ENCODE measurements at regions of chr1 and their contacts with region 1.

Region 1: DNA sequence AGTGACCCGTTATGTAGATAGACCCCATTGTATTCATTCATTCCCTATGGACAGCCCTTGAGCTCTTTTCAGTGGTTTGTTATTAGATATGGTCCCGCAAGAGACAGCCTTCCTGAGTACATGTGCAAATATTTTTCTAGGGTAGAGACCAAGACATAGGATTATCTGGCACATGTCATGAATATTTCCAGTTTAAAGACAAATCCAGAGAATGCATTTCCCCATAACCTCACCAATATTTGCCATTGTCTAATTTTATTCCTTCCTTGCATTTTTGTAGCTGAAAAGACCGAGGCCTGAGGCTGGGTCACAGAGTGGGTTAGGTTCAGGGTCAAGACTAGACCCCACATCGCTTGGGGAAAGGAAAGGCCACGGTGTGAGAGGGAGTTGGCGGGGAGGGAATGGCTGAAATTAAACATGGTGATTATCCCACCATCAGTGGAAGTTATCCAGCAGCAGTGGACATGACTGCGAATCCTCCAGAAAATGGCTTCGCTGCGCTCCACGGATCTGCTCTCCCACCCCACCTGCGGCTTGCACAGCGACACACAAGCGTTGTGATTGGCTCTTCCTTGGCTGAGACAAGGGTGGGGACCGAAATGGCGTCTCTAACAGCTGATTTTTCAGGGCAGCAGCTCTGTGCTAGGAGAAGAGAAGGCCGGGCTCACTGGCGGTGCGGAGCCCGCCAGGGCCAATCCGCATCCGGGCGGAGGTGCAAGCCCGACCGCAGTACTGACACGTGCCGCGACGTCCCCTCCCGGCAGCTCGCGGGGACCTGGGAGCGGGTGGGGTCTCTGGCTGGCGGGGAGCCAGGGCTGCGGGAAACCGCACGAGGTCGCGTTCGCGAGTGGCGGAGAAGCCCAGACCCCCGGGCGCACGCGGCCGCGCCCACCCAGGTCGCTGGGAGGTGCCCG is 16.1 kb upstream of the STMN1 start:
- DNase-seq: peak; percentile 46 to 60 (median 57)
- H3K4me3 ChIP-seq: peak overlapping the region; percentile 17 to 54
- H3K4me3 Mint-ChIP-seq: peak overlapping the region; percentile 85 to 92 (median 88)
- H3K27ac ChIP-seq: no peak overlapping the region
- H3K27ac Mint-ChIP-seq: peak overlapping the region; percentile 49 to 90 (median 65)
- H3K4me1 ChIP-seq: peaks cover 36% of the 10 kb centered on the region
- H3K4me1 Mint-ChIP-seq: peaks cover 19 to 33% (median 23%) of the 10 kb centered on the region in 4 donors
- H3K27me3 ChIP-seq: no peaks in the 10 kb centered on the region
- H3K27me3 Mint-ChIP-seq: peaks cover 2 to 3% of the 10 kb centered on the region in 2 donors

Region 2: GRCh38 chr1:25754470-25755181 is 167.7 kb before region 1 on chr1:
- CTCF ChIA-PET with region 1: no interaction called
- POLR2A ChIA-PET with region 1: no interaction called
- intact Hi-C with region 1: no loop called
- DNase-seq: no peak
- H3K4me3 ChIP-seq: no peak overlapping the region
- H3K4me3 Mint-ChIP-seq: peak overlapping the region in 4 of 8 donors; percentile 15 to 41 (median 37)
- H3K27ac ChIP-seq: no peak overlapping the region
- H3K27ac Mint-ChIP-seq: peak overlapping the region; percentile 46 to 84 (median 68)
- H3K4me1 ChIP-seq: peaks cover 18% of the 10 kb centered on the region
- H3K4me1 Mint-ChIP-seq: peaks cover 21 to 49% (median 22%) of the 10 kb centered on the region in 4 donors
- H3K27me3 ChIP-seq: no peaks in the 10 kb centered on the region
- H3K27me3 Mint-ChIP-seq: no peaks in the 10 kb centered on the region

Region 3: GRCh38 chr1:25905680-25906643 is 16.4 kb before region 1 on chr1 and contains the start of gene STMN1:
- CTCF ChIA-PET with region 1: interaction called, 4 read pairs
- POLR2A ChIA-PET with region 1: interaction called, 18 read pairs
- intact Hi-C with region 1: loop called (anchors 2 kb)
- DNase-seq: peak; percentile 74 to 88 (median 77)
- H3K4me3 ChIP-seq: peak within 1 kb of the TSS; percentile 71 to 93
- H3K4me3 Mint-ChIP-seq: peak within 1 kb of the TSS; percentile 89 to 96 (median 92)
- H3K27ac ChIP-seq: peak within 1 kb of the TSS; percentile 54
- H3K27ac Mint-ChIP-seq: peak within 1 kb of the TSS; percentile 87 to 98 (median 96)
- H3K4me1 ChIP-seq: peaks cover 26% of the 10 kb centered on the region
- H3K4me1 Mint-ChIP-seq: peaks cover 14 to 31% (median 21%) of the 10 kb centered on the region in 4 donors
- H3K27me3 ChIP-seq: no peaks in the 10 kb centered on the region
- H3K27me3 Mint-ChIP-seq: no peaks in the 10 kb centered on the region
- total RNA-seq, gene STMN1: 34.5 to 37.1 TPM

Measured in CD4-positive, alpha-beta memory T cell (primary cell).